ENCODE measurements at regions of chr10 and their contacts with region 1.

Region 1: DNA sequence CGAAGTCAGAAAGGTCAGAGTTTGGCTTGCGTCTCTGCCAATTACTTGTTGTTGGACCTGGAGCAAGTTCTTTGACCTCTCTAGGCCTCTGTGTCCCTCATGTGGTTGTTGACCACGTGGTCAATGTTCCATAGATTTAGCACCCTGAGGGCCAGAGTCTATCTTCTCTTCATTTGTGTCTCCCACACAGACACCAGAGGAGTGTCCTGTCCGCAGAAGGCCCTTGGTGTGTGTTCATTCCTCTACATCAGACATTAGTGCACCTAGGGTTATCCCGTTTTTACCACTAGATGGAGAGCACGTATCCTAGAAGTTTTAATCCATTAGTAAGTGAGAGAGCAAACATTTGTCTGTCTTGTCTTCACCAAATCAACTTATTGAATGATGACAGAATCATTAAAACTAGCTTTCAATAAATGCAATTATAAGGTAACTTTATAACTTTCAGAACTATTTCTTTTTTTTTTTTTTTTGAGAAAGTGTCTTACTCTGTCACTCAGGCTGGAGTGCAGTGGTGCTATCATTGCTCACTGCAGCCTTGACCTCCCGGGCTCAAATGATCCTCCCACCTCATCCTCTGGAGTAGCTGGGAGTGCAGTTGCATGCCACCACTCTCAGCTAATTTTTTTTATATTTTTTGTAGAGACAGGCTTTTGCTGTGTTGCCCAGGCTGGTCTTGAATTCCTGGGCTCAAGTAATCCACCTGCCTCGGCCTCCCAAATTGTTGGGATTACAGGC is 122.5 kb upstream of the ANKRD1 start:
- DNase-seq: no peak
- ATAC-seq: peak; percentile 88

Region 2: DNA sequence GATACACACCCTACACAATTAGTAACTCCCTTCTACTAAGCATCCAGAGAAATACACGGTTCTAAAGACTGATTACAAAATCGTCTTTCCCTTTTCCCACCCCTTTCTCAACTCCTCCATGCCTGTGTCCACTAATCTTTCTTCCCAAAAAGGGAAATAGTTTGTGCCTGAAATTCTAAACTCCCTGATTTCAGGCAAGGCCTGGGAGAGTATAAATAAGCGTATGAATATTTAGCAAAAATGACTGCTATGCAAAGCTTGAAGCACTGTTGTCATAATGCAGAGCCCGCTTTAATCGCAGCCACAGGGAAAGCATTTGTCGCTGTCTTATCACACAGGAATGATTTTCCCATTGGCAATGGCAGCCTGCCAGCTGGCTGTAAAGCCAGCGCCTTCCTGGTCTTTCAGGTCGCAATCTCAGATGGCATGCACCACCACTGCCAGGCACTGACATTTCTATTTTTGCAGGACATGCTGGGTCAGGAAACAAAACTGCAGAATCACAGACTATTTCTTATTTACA is 34.3 kb after region 1 on chr10:
- intact Hi-C with region 1: loop called (anchors 5 kb)
- DNase-seq: peak; percentile 86
- ATAC-seq: peak; percentile 87